HepG2 (cell line): ENCODE measurements at regions of chr2 and their contacts with region 1.

Region 1: DNA sequence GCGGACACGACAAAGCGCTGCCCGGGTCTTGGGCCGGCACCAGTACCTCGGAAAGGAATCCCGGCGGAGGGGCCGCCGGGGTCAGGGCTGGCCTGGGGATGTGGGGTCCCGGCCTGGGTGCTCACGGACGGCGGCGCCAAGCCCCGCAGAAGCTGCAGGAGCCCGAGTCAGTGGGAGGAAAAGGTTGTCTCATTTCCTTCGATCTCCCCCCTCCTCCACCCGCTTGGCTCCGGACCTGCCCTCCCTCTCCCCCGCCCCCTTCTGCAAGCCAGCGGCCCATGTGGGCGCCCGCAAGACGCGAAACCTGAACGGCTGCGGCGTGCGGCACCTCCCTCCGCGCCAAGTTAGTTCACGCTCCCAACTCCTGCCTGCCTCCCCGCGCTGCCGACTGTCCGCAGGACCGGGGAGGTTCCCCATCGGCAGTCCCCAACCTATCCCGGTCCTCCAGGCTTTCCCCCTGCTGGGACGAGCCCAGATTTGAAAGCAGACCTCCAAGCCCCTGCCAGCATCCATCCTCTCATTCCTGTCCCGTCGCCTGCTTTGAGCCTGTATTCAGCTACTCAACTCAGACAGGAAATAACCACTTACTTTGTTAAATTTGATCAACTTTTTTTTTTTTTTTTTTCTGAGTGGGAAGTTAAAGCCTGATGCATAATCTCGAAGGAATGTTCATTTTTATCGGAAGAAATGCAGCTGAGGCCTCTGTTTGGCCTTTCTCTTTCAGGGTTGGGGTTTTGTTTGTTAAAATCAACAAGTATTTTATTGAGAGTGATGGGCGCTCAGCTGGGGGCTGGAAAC is at the start of gene EVA1A:
- DNase-seq: peak; percentile 73
- ATAC-seq: peak; percentile 82
- H3K4me3 ChIP-seq: peak within 1 kb of the TSS; percentile 84 to 93 (median 91)
- H3K27ac ChIP-seq: peak within 1 kb of the TSS; percentile 78
- H3K4me1 ChIP-seq: peaks cover 83% of the 10 kb centered on the region
- H3K27me3 ChIP-seq: no peaks in the 10 kb centered on the region; a peak in 1 of 5 replicates
- CTCF ChIP-seq: no peak; the same call in 1 of the 2 replicates
- EP300 ChIP-seq: no peak; a peak in 1 of 4 replicates
- POLR2A ChIP-seq: peak in 1 of 2 experiments; percentile 85; a peak in 3 of 4 replicates
- RAD21 ChIP-seq: peak; percentile 33
- total RNA-seq, gene EVA1A: 55.9 and 57.8 TPM in 2 replicates

Region 2: DNA sequence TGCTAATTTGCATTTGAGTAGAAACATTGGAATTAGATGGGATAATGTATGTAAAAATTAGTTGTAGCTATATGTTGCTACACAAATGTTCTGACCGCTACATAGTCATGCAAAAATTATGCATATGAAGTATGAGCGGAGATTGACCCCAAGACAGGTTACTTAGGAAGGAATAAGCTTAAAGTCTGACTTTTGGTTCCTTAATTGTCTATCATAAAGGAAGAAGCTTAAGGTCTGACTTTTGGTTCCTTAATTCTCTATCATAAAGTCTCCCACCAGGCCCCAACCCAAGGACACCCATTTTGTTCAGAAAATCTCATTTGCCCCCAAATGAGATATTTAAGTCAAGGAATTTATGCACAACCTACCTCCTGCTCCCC is 106.7 kb before region 1 on chr2:
- CTCF ChIA-PET with region 1: no interaction called
- POLR2A ChIA-PET with region 1: no interaction called
- in situ Hi-C with region 1: no loop called
- intact Hi-C with region 1: no loop called
- DNase-seq: no peak
- ATAC-seq: no peak
- H3K4me3 ChIP-seq: no peak overlapping the region
- H3K27ac ChIP-seq: no peak overlapping the region
- H3K4me1 ChIP-seq: peaks cover 2% of the 10 kb centered on the region; the same call in 1 of the 2 replicates
- H3K27me3 ChIP-seq: no peaks in the 10 kb centered on the region
- CTCF ChIP-seq: no peak
- EP300 ChIP-seq: no peak
- POLR2A ChIP-seq: no peak
- RAD21 ChIP-seq: no peak

Region 3: DNA sequence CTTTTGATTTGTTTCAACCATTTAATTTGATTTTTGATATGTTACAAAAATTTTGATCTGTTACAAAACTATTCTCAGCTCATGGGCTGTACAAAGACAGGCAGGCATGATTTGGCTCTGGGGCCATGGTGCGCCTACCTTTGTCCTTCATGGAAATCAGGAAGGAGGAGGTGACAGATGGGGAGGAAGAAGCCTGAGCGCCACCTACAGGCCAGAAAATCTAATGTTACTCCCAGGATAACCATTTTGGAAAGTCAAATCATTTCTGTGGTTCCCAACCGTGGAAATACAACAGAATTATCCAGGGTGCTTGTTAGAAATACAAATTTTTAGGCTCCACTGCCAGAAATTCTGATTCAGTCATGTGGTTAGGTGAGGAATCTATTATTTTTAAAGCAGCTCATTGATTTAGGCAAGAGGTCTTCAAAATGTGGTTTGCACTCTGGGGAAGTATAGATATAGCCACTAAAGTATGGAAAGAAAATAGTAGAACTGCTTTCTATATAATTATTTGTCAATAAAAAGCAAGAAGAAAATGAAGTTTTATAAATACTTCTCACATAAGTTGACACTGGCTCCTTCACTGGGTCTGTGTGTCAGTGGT is 94.2 kb before region 1 on chr2:
- CTCF ChIA-PET with region 1: interaction called, 4 read pairs
- POLR2A ChIA-PET with region 1: interaction called, 6 read pairs
- in situ Hi-C with region 1: no loop called
- intact Hi-C with region 1: loop called (anchors 1 kb)
- DNase-seq: peak; percentile 39
- ATAC-seq: peak; percentile 58
- H3K4me3 ChIP-seq: no peak overlapping the region
- H3K27ac ChIP-seq: no peak overlapping the region
- H3K4me1 ChIP-seq: peaks cover 28% of the 10 kb centered on the region
- H3K27me3 ChIP-seq: no peaks in the 10 kb centered on the region
- CTCF ChIP-seq: peak; percentile 61
- EP300 ChIP-seq: no peak
- POLR2A ChIP-seq: no peak
- RAD21 ChIP-seq: no peak; the same call in 1 of the 2 replicates

Region 4: GRCh38 chr2:75480971-75481836 is 79.8 kb before region 1 on chr2:
- CTCF ChIA-PET with region 1: no interaction called
- POLR2A ChIA-PET with region 1: interaction called, 8 read pairs
- in situ Hi-C with region 1: no loop called
- intact Hi-C with region 1: loop called (anchors 5 kb)
- DNase-seq: peak; percentile 88
- ATAC-seq: peak; percentile 95
- H3K4me3 ChIP-seq: peak overlapping the region in 1 of 3 experiments; percentile 29; a peak in 1 of 6 replicates
- H3K27ac ChIP-seq: peak overlapping the region; percentile 69
- H3K4me1 ChIP-seq: peaks cover 52% of the 10 kb centered on the region
- H3K27me3 ChIP-seq: no peaks in the 10 kb centered on the region
- CTCF ChIP-seq: peak; percentile 76
- EP300 ChIP-seq: peak in 1 of 2 experiments; percentile 98; a peak in 2 of 4 replicates
- POLR2A ChIP-seq: 0 out of 4 replicates have a peak, but pooled peaks of 1 of the 2 experiments have one; percentile 12
- RAD21 ChIP-seq: 0 out of 2 replicates have a peak, but pooled peaks have one; percentile 16

Region 5: DNA sequence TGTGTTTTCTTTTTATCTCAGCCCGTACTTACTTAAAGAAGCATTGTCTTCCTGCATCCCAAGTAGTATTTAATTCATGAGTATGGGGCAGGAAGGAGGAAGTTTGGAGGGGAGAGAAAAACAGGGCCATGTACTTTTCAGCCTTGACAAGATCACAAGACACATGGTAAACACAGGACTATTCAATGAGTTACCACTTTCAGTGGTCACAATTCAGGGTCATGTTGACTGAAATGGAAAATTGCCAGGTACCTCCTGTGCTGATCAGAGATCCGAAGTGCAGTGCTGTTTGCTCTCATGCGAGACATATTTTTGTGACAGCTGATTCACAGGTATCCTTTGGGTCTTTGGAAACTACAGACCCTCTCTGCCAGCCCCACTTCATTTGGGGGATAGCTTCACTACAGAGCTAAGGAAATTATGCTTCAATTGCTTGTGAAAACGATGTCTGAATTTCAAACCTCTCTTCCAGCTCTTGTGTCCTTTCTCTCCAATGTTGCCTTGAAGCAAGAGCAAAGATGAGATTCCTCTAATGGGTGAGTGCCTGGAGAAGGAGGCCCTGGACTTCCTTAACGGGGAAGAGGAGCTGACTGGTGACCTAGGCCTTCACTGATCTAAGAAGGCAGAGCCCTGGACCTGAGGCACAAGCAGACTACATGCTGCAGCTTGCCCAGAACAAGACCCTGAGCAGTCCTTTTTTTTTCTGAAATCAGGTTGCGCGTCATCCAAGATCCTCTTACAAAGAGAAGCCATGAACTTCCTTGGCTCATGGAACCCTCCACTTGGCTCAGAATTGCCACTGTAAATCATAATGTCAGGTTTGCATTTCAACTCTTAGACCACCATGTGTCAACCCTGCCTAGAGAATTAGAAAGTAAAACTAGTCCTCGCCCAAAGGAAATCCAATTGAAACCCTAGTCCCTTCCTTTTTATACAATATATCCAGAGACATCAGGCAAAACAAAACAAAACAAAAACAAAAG is 44.3 kb before region 1 on chr2:
- CTCF ChIA-PET with region 1: no interaction called
- POLR2A ChIA-PET with region 1: interaction called, 118 read pairs
- in situ Hi-C with region 1: no loop called
- intact Hi-C with region 1: no loop called
- DNase-seq: peak; percentile 99
- ATAC-seq: peak; percentile 93
- H3K4me3 ChIP-seq: peak overlapping the region in 1 of 3 experiments; percentile 24; a peak in 1 of 6 replicates
- H3K27ac ChIP-seq: peak overlapping the region; percentile 92
- H3K4me1 ChIP-seq: peaks cover 84% of the 10 kb centered on the region
- H3K27me3 ChIP-seq: no peaks in the 10 kb centered on the region
- CTCF ChIP-seq: no peak
- EP300 ChIP-seq: peak; percentile 84 to 100; a peak in 3 of 4 replicates
- POLR2A ChIP-seq: peak; percentile 23 to 36; a peak in 1 of 4 replicates
- RAD21 ChIP-seq: no peak; the same call in 1 of the 2 replicates

Region 6: GRCh38 chr2:75548036-75548573 is 12.9 kb before region 1 on chr2:
- CTCF ChIA-PET with region 1: no interaction called
- POLR2A ChIA-PET with region 1: interaction called, 84 read pairs
- in situ Hi-C with region 1: no loop called
- intact Hi-C with region 1: loop called (anchors 2 kb)
- DNase-seq: no peak
- ATAC-seq: no peak
- H3K4me3 ChIP-seq: no peak overlapping the region
- H3K27ac ChIP-seq: no peak overlapping the region
- H3K4me1 ChIP-seq: peaks cover 97% of the 10 kb centered on the region
- H3K27me3 ChIP-seq: no peaks in the 10 kb centered on the region
- CTCF ChIP-seq: no peak
- EP300 ChIP-seq: no peak
- POLR2A ChIP-seq: 0 out of 4 replicates have a peak, but pooled peaks of 1 of the 2 experiments have one; percentile 6
- RAD21 ChIP-seq: no peak

Region 7: GRCh38 chr2:75570948-75571729 is 10.2 kb after region 1 on chr2:
- CTCF ChIA-PET with region 1: no interaction called
- POLR2A ChIA-PET with region 1: interaction called, 126 read pairs
- in situ Hi-C with region 1: no loop called
- intact Hi-C with region 1: no loop called
- DNase-seq: peak; percentile 96
- ATAC-seq: peak; percentile 94
- H3K4me3 ChIP-seq: peak overlapping the region; percentile 39 to 54 (median 46)
- H3K27ac ChIP-seq: peak overlapping the region; percentile 95
- H3K4me1 ChIP-seq: peaks cover 75% of the 10 kb centered on the region
- H3K27me3 ChIP-seq: no peaks in the 10 kb centered on the region
- CTCF ChIP-seq: no peak
- EP300 ChIP-seq: peak in 1 of 2 experiments; percentile 95; a peak in 2 of 4 replicates
- POLR2A ChIP-seq: peak; percentile 49 to 82; a peak in 3 of 4 replicates
- RAD21 ChIP-seq: no peak; the same call in 1 of the 2 replicates

Region 8: DNA sequence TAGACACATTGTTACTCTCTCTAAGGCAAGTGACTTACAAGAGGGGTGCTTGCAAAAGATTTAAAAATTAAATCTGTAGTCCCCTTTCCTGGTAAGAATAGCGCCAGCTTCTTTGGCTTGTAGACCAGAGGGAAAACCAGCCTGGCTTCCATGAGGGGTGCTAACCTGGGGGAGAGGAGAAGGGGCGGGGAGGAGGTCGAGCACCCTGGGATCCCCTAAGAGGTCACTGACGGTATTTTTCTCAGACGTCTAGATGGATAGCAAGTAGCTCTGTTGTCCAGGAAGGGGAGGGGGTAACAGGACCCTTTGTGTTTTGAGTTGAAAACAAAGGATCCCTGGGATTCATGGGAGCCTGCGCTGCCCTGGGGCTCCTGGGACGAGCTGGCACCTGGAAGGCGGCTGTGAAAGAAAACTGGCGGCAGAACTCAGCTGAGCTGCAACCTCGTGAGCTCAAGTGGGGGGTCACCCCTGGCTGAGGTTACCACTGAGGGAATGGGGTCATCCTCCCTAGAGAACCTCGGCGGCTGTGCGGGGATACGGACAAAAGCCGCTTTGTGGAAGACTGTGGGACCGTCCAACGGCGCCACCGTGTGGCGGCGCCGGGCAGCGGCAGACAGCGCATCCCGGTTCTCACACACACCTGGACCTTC is 47.8 kb after region 1 on chr2:
- CTCF ChIA-PET with region 1: interaction called, 18 read pairs
- POLR2A ChIA-PET with region 1: interaction called, 16 read pairs
- in situ Hi-C with region 1: loop called (anchors 10 kb)
- intact Hi-C with region 1: loop called (anchors 1 kb)
- DNase-seq: peak; percentile 79
- ATAC-seq: peak; percentile 95
- H3K4me3 ChIP-seq: peak overlapping the region; percentile 28 to 65 (median 28); a peak in 5 of 6 replicates
- H3K27ac ChIP-seq: peak overlapping the region; percentile 8
- H3K4me1 ChIP-seq: peaks cover 66% of the 10 kb centered on the region
- H3K27me3 ChIP-seq: no peaks in the 10 kb centered on the region; a peak in 1 of 5 replicates
- CTCF ChIP-seq: peak; percentile 99
- EP300 ChIP-seq: peak in 1 of 2 experiments; percentile 33; a peak in 1 of 4 replicates
- POLR2A ChIP-seq: no peak
- RAD21 ChIP-seq: peak; percentile 99

Region 9: DNA sequence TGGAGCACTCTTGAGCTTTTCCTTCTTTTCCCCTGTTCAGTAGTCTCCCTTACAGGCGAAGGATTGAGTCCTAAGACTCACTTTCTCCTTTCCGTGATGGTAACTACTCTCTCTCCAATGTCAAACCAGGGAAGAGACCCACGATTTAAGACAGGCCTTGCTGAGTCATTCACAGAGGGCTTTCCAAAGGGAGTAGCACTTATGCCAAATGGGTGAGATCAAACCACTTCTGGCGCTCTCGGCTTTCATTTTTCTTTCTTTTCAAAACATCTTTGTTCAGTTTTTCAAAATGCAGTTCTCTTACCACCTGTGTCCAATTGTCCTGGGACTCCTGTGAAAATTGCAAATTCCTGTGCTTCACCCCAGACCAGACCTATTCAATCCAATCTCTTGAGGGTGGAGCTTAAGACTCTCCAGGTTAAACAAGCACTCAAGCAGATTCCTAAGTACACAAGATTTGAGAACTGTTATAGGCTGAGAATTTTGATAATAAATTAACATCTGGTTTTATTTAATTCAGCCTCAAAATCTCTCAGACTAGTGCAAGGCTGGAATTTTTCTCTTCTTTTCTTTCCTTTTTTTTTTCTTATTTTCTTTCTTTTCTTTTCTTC is 71.2 kb after region 1 on chr2:
- CTCF ChIA-PET with region 1: no interaction called
- POLR2A ChIA-PET with region 1: no interaction called
- in situ Hi-C with region 1: no loop called
- intact Hi-C with region 1: no loop called
- DNase-seq: no peak
- ATAC-seq: no peak
- H3K4me3 ChIP-seq: no peak overlapping the region
- H3K27ac ChIP-seq: no peak overlapping the region
- H3K4me1 ChIP-seq: no peaks in the 10 kb centered on the region
- H3K27me3 ChIP-seq: peaks cover 0 to 26% of the 10 kb centered on the region in 2 experiments; a peak in 2 of 5 replicates
- CTCF ChIP-seq: no peak
- EP300 ChIP-seq: no peak
- POLR2A ChIP-seq: no peak
- RAD21 ChIP-seq: no peak

Region 10: GRCh38 chr2:75710577-75711253 is 149.7 kb after region 1 on chr2 and contains the start of gene GCFC2:
- CTCF ChIA-PET with region 1: no interaction called
- POLR2A ChIA-PET with region 1: no interaction called
- in situ Hi-C with region 1: no loop called
- intact Hi-C with region 1: no loop called
- DNase-seq: peak; percentile 90
- ATAC-seq: peak; percentile 97
- H3K4me3 ChIP-seq: peak within 1 kb of the TSS; percentile 66 to 75 (median 67)
- H3K27ac ChIP-seq: peak within 1 kb of the TSS; percentile 94
- H3K4me1 ChIP-seq: peaks cover 43% of the 10 kb centered on the region
- H3K27me3 ChIP-seq: no peaks in the 10 kb centered on the region; a peak in 1 of 5 replicates
- CTCF ChIP-seq: peak; percentile 76
- EP300 ChIP-seq: no peak; a peak in 2 of 4 replicates
- POLR2A ChIP-seq: peak; percentile 87 to 91
- RAD21 ChIP-seq: peak; percentile 74; the same call in 1 of the 2 replicates
- total RNA-seq, gene GCFC2: 49.0 and 65.8 TPM in 2 replicates